PC-3 (cell line): ENCODE measurements at regions of chr3 and their contacts with region 1.

Region 1: DNA sequence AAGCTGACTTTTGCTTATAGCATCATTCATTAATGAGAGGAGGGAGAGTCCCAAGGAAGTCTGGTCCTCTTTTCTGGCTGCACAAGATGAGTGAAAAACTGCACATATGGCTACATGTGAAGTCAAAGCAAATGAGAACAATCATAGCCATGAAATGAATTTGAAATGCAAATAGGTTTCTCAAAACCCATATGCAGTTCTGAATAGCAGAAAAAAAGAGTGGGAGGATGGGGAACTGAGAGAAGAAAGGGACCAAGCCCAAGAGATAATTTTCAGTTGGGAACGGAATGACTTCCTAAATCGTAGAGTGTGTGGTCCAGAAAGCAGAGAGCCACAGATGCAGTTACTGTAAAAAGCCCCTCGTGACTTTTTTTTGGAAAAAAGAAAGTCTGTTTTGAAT is 66.3 kb downstream of the GTPBP8 start:
- DNase-seq: no peak
- ATAC-seq: no peak
- H3K4me3 ChIP-seq: no peak overlapping the region
- H3K27ac ChIP-seq: no peak overlapping the region
- H3K4me1 ChIP-seq: no peaks in the 10 kb centered on the region
- H3K27me3 ChIP-seq: no peaks in the 10 kb centered on the region
- CTCF ChIP-seq: no peak

Region 2: DNA sequence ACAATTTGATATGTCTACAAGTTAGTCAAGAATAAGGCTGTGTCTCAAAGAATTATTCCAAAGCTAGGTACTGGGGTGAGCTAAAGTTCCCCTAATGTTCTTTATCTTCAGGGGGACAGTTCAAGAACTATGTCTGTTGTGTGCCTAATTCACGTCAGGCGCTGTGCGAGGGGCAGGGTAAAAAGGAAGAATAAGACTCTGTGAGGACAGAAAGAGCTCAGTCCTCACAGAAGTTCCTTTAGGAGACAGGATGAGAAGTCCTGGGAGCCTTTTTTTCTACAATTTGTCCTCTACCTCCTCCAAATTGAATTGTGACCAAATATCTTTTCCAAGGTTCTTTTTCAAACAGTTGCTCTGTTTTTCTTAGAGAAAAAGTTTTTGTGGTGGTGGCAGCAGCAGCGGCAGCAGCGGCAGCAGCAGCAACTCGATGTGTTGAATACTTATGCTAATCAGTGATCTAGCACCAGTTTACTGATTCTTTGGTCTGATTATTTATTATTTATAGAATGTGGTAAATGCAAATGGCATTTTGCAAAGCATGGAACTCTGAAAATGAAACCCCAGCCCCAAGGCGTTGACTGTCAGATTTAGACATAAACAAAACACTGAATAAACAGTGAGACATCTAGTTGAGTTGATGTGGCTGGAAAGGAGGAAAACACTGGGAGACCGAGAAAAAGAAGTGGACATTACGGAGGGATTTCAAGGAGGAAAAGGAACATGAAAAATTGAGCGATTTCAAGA is 22.3 kb after region 1 on chr3:
- CTCF ChIA-PET with region 1: no interaction called
- POLR2A ChIA-PET with region 1: no interaction called
- intact Hi-C with region 1: no loop called
- DNase-seq: no peak
- ATAC-seq: no peak
- H3K4me3 ChIP-seq: no peak overlapping the region
- H3K27ac ChIP-seq: no peak overlapping the region
- H3K4me1 ChIP-seq: peaks cover 1% of the 10 kb centered on the region; the same call in 1 of the 2 replicates
- H3K27me3 ChIP-seq: no peaks in the 10 kb centered on the region
- CTCF ChIP-seq: no peak

Region 3: DNA sequence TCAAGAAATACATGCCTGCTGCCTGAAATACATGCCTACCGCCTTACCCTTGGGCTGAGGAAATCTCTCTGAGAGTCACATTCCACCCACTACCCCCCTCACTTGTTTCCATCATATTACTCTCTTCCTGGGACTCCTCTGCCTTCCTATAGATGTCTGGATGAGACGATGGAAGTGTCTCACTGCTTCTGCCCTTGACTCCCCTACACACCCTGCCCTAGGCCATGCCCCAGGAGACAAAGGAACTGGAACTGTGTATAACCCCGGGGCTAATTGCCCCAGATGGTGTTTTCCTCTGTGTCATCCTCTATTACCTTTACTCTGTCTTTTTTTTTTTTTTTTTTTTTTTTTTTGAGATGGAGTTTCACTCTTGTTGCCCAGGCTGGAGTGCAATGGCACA is 35.6 kb after region 1 on chr3:
- CTCF ChIA-PET with region 1: no interaction called
- POLR2A ChIA-PET with region 1: no interaction called
- intact Hi-C with region 1: loop called (anchors 1 kb)
- DNase-seq: no peak
- ATAC-seq: no peak
- H3K4me3 ChIP-seq: no peak overlapping the region
- H3K27ac ChIP-seq: no peak overlapping the region
- H3K4me1 ChIP-seq: peaks cover 7% of the 10 kb centered on the region
- H3K27me3 ChIP-seq: no peaks in the 10 kb centered on the region
- CTCF ChIP-seq: no peak